Heart right ventricle (tissue), 16 donors: ENCODE measurements at regions of chr2 and their contacts with region 1.

Region 1: GRCh38 chr2:206989306-206989705 is 50.0 kb downstream of the CPO start:
- DNase-seq: peak in 1 of 2 donors; percentile 27
- ATAC-seq: peak in 7 of 8 donors; percentile 52 to 88 (median 82)
- H3K4me3 ChIP-seq: no peak overlapping the region
- H3K27ac ChIP-seq: no peak overlapping the region
- H3K4me1 ChIP-seq: peaks cover 0 to 12% (median 0%) of the 10 kb centered on the region in 9 donors
- H3K27me3 ChIP-seq: no peaks in the 10 kb centered on the region
- CTCF ChIP-seq: peak; percentile 38 to 80 (median 74)

Region 2: GRCh38 chr2:205925373-205926337 is 1063.7 kb before region 1 on chr2:
- intact Hi-C with region 1: no loop called
- DNase-seq: peak; percentile 75 to 82
- ATAC-seq: peak; percentile 88 to 97 (median 92)
- H3K4me3 ChIP-seq: peak overlapping the region in 6 of 10 donors; percentile 9 to 41 (median 26)
- H3K27ac ChIP-seq: peak overlapping the region in 1 of 10 donors; percentile 55
- H3K4me1 ChIP-seq: peaks cover 1 to 24% (median 13%) of the 10 kb centered on the region in 9 donors
- H3K27me3 ChIP-seq: peaks cover 0 to 47% (median 24%) of the 10 kb centered on the region in 7 donors
- CTCF ChIP-seq: peak; percentile 81 to 98 (median 95)

Region 3: DNA sequence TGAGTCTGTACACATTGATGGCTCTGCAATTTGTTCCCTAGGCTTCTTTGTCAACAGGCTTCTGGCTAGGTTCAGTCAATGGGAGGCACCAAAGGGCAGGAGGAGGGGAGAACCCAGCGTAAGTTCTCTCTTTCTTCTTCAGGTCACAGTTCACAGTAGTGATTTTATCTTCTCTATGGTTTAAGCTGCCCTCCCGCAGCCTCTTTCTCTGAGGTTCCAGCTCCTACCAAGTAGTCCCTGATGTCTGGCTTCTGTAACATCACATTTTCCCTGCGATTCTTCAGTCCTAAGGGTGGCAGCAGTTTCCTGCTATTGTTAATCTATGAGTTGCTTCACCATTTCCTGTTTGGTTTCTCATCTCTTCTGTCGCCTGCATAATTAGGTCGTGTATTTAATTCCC is 57.4 kb after region 1 on chr2:
- intact Hi-C with region 1: loop called in 1 of 10 experiments (anchors 10 kb)
- DNase-seq: no peak
- ATAC-seq: peak; percentile 30 to 85 (median 68)
- H3K4me3 ChIP-seq: no peak overlapping the region
- H3K27ac ChIP-seq: peak overlapping the region in 1 of 10 donors; percentile 64
- H3K4me1 ChIP-seq: peaks cover 0 to 18% (median 8%) of the 10 kb centered on the region in 9 donors
- H3K27me3 ChIP-seq: no peaks in the 10 kb centered on the region
- CTCF ChIP-seq: peak in 7 of 9 donors; percentile 20 to 56 (median 39)

Region 4: GRCh38 chr2:207694811-207695281 is 705.5 kb after region 1 on chr2:
- intact Hi-C with region 1: no loop called
- DNase-seq: no peak
- ATAC-seq: no peak
- H3K4me3 ChIP-seq: no peak overlapping the region
- H3K27ac ChIP-seq: no peak overlapping the region
- H3K4me1 ChIP-seq: peaks cover 0 to 28% (median 9%) of the 10 kb centered on the region in 9 donors
- H3K27me3 ChIP-seq: no peaks in the 10 kb centered on the region
- CTCF ChIP-seq: no peak